ENCODE measurements at regions of chr7 and their contacts with region 1.

Region 1: DNA sequence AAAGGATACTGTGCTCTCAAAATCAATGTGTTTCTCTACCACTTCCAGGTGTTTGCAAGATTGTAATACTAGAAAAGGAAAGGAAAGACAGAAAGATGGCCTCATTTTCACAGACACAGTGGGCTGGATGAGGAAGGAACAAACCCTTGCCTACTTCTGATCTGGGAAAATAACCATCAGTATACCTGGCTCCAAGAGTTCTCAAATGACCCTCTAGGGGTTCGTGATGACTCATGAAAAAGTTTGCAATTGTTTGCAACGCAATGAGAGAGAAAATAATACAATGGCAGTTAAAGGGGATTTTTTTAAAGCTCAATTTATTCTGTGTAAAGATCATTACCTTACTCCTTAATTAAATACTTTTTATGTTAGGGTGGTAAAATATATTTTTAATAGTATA is 197.6 kb upstream of the INHBA start:
- DNase-seq: no peak
- ATAC-seq: peak; percentile 64; the same call in 2 of the 3 replicates
- H3K4me3 ChIP-seq: no peak overlapping the region
- H3K27ac ChIP-seq: no peak overlapping the region
- H3K4me1 ChIP-seq: no peaks in the 10 kb centered on the region
- H3K27me3 ChIP-seq: no peaks in the 10 kb centered on the region
- CTCF ChIP-seq: no peak
- EP300 ChIP-seq: no peak
- POLR2A ChIP-seq: no peak
- RAD21 ChIP-seq: no peak

Region 2: DNA sequence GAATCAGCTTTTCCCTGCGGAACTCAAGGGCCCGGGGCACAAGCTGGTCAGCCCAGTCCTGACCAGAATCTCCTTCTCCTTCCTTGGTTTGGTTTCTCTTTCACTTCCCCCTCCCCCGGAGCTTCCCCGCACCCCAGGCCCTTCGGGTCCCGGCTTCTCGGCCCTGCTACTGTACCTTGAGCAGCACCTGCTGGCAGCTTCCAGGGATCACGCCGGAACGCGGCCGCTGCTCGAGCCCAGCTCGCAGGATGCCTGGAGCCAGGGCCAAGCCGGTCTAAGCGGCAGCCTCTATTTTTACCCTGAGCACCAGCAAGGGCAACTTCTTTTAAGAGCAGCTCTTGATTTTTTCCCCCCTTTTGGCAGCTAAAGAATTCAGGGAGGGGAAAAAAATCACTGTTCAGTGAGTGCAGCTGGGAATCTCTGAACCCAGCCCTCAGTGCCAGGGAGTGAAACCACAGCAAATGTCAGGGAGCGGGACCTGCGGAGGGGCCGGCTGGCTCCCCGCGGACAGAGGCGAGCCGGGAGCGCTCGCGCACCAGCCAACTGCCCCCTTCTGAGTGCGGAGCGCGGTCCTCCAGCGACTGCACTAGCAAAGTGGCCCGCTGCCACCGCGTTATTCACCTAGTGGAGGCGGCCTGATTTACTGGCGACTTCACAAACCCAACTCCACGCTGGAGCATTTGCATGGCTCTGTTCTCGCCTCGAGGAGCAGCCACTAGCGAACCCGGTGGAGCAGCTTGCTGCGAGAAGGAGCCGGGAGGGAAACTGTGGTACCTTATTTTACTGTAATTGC is 195.2 kb before region 1 on chr7:
- CTCF ChIA-PET with region 1: no interaction called
- POLR2A ChIA-PET with region 1: no interaction called
- RAD21 ChIA-PET with region 1: no interaction called
- SMC1A ChIA-PET with region 1: no interaction called
- in situ Hi-C with region 1: no loop called
- intact Hi-C with region 1: no loop called
- DNase-seq: peak; percentile 50
- ATAC-seq: peak; percentile 98
- H3K4me3 ChIP-seq: peak overlapping the region; percentile 54; the same call in 1 of the 2 replicates
- H3K27ac ChIP-seq: no peak overlapping the region
- H3K4me1 ChIP-seq: peaks cover 11% of the 10 kb centered on the region
- H3K27me3 ChIP-seq: no peaks in the 10 kb centered on the region
- CTCF ChIP-seq: peak; percentile 68 to 88 (median 82)
- EP300 ChIP-seq: peak in 1 of 2 experiments; percentile 11; a peak in 1 of 4 replicates
- POLR2A ChIP-seq: no peak
- RAD21 ChIP-seq: peak; percentile 95

Region 3: GRCh38 chr7:41889040-41889439 is 11.5 kb before region 1 on chr7:
- CTCF ChIA-PET with region 1: interaction called, 10 read pairs
- POLR2A ChIA-PET with region 1: interaction called, 3 read pairs
- RAD21 ChIA-PET with region 1: interaction called, 3 read pairs
- SMC1A ChIA-PET with region 1: interaction called, 20 read pairs
- in situ Hi-C with region 1: no loop called
- intact Hi-C with region 1: no loop called
- DNase-seq: no peak
- ATAC-seq: peak; percentile 71
- H3K4me3 ChIP-seq: no peak overlapping the region
- H3K27ac ChIP-seq: no peak overlapping the region
- H3K4me1 ChIP-seq: peaks cover 10% of the 10 kb centered on the region
- H3K27me3 ChIP-seq: no peaks in the 10 kb centered on the region
- CTCF ChIP-seq: 0 out of 6 replicates have a peak, but pooled peaks of 1 of the 3 experiments have one; percentile 31
- EP300 ChIP-seq: no peak
- POLR2A ChIP-seq: no peak
- RAD21 ChIP-seq: peak; percentile 49

Region 4: GRCh38 chr7:41933427-41933826 is 32.9 kb after region 1 on chr7:
- CTCF ChIA-PET with region 1: no interaction called
- POLR2A ChIA-PET with region 1: no interaction called
- RAD21 ChIA-PET with region 1: no interaction called
- SMC1A ChIA-PET with region 1: no interaction called
- in situ Hi-C with region 1: no loop called
- intact Hi-C with region 1: no loop called
- DNase-seq: no peak
- ATAC-seq: no peak
- H3K4me3 ChIP-seq: no peak overlapping the region
- H3K27ac ChIP-seq: no peak overlapping the region
- H3K4me1 ChIP-seq: peaks cover 3% of the 10 kb centered on the region; the same call in 1 of the 2 replicates
- H3K27me3 ChIP-seq: no peaks in the 10 kb centered on the region; a peak in 1 of 4 replicates
- CTCF ChIP-seq: no peak
- EP300 ChIP-seq: no peak
- POLR2A ChIP-seq: no peak
- RAD21 ChIP-seq: no peak

Region 5: GRCh38 chr7:42014625-42015546 is 114.4 kb after region 1 on chr7:
- CTCF ChIA-PET with region 1: no interaction called
- POLR2A ChIA-PET with region 1: no interaction called
- RAD21 ChIA-PET with region 1: no interaction called
- SMC1A ChIA-PET with region 1: no interaction called
- in situ Hi-C with region 1: no loop called
- intact Hi-C with region 1: no loop called
- DNase-seq: no peak
- ATAC-seq: no peak
- H3K4me3 ChIP-seq: no peak overlapping the region
- H3K27ac ChIP-seq: no peak overlapping the region
- H3K4me1 ChIP-seq: 0 out of 2 replicates have a peak, but pooled peaks cover 3% of the 10 kb centered on the region
- H3K27me3 ChIP-seq: no peaks in the 10 kb centered on the region; a peak in 1 of 4 replicates
- CTCF ChIP-seq: peak; percentile 26 to 75 (median 67)
- EP300 ChIP-seq: no peak
- POLR2A ChIP-seq: no peak
- RAD21 ChIP-seq: peak; percentile 50

Region 6: GRCh38 chr7:42385912-42386311 is 485.4 kb after region 1 on chr7:
- CTCF ChIA-PET with region 1: no interaction called
- POLR2A ChIA-PET with region 1: no interaction called
- RAD21 ChIA-PET with region 1: no interaction called
- SMC1A ChIA-PET with region 1: no interaction called
- in situ Hi-C with region 1: no loop called
- intact Hi-C with region 1: no loop called
- DNase-seq: no peak
- ATAC-seq: no peak
- H3K4me3 ChIP-seq: no peak overlapping the region
- H3K27ac ChIP-seq: no peak overlapping the region
- H3K4me1 ChIP-seq: no peaks in the 10 kb centered on the region
- H3K27me3 ChIP-seq: no peaks in the 10 kb centered on the region
- CTCF ChIP-seq: 0 out of 6 replicates have a peak, but pooled peaks of 1 of the 3 experiments have one; percentile 3
- EP300 ChIP-seq: no peak
- POLR2A ChIP-seq: no peak
- RAD21 ChIP-seq: no peak